Right ventricle myocardium inferior (tissue), 1 donor: ENCODE measurements at regions of chr22 and their contacts with region 1.

Region 1: DNA sequence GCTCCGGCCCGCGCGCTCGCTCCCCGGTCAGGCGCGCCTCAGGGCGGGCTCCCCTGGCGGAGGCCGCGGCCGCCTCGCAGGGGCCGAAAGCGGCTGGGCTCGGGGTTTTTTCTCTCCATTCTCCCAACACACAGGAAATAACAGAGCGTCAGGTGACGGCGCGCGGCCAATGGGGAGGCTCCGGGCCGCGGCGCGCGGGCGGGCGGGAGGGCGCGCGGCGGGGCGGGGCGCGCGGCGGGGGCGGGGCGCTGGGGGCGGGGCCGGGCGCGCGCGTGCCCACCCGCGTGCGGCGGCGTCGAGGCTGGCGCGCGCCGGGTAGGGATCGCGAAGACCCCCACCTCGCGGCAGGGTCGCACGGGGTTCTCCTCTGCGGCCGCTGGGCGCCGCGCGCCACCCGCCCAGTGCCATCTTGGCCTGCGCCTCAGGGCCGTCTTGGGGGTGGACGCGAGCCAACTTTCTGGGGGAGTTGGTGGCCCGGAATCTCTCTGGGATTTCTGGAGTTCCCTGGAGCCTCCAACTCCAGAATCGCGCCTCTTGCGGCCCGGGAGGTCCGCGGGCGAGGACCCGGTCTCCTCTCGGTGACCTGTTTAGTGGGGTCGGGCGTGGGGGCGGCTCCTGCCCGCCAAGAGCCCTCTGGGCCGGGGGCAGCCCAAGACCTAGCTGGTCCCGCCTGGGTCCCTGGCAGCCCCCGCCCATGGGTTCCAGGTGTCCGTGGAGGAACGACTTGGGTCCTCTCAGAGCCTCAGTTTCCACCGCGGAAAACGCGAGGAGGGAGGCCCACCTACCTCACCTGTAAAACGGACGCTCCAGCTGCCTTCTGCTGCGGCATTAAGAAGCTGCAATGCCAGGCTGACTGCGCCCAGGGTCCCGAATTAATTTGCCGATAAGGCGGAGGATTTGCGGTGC is at the start of gene TCF20:
- DNase-seq: peak; percentile 93
- ATAC-seq: peak; percentile 75
- total RNA-seq, gene TCF20: 16.7 TPM

Region 2: DNA sequence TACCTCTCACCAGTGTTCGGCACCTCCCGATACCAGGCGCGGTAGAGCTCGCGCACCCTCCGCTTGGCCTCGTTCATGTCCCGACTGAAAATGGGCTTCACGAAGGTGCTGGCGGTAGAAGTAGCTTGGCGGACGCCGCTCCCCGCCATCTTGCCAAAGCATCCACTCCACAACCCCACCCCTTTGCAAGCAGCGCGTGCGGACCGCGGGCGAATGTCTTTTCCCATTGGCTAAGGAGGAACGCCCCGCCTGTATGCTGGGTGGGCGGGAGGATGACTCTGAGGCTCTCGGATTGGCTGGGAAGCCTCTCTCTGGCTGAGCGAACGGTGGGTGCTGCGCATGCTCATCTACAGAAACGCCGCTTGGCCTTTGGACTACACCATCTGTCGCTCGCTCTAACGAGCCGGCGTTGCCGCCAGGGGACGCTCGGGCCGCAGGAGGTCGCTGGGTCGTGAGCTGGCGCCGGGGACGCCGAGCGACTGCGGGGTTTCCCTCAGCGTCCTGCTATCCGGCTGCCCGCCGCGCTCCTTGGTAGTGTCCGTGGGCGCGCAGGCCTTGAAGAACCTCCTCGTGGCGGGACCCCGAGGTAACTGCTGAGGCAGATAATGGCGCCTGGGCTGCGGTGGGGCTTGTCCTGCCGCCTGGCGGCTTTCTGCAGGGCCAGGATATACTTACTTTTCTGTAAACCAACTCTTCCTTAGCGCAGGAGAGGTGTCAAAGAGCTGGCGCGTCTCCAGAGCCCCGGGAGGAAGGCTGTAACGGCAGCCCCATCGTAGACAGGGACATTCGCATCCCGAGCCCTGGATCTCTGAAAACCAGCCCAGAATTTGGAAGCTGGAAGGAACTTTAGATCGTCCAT is 179.9 kb before region 1 on chr22 and contains the start of gene NDUFA6:
- intact Hi-C with region 1: loop called (anchors 5 kb)
- DNase-seq: peak; percentile 99
- ATAC-seq: peak; percentile 98
- total RNA-seq, gene NDUFA6: 296 TPM

Region 3: DNA sequence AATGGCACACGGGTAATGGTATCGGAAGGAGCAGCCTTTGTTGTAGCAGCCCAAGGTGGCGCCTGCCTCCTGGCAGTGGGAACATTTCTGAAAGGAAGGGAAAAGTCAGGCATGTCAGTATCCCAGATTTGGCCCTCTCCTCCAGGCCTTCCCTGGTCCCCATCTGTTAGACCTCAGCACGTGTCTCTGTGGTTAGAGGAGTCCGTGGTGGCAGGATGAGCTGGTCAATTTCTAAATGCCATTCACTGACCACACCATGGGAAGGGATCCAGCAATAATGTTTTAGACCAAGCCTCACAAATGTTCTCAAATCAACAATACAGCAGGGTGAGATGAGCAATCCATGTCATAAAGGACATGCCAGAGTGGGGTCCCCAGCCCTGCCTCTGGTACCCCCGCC is 91.1 kb before region 1 on chr22:
- intact Hi-C with region 1: loop called (anchors 10 kb)
- DNase-seq: no peak
- ATAC-seq: no peak

Region 4: DNA sequence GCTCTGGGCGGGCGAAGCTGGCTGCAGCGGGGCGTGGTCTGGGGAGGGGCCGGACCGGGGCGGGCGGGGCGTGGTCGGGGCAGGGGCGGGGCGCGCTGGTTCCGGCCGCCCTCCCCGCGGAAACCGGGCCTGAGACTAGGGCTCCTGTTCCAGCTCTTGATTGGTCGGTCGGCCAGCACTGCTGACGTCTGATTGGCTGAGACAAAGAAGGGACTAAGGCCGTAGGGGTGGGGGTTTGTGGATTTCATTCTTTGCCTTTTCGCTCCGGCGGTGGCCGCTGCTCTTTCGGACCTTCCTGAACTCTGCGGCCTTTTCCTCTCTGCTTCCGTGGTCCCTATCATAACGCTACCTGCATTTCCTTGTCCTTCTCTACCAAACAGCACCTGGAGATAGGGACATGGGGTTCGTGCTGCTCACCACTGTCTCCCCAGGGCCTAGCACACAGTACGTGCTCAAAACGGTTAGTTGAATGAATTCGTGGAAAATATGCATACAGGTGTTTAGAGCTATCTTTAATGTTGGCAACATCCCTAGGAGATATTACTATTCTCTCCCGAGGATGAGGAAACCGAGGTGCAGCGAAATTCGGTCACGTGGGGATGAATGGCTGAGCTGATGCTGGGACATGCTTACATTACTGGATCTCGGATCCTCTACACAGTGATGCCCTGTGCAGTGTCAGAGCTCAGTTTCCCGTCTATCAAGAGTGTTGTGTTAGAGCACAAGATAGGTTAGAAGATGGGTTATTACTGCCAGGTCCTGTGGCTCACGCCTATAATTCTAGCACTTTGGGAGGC is 98.7 kb after region 1 on chr22:
- intact Hi-C with region 1: loop called (anchors 10 kb)
- DNase-seq: peak; percentile 95
- ATAC-seq: peak; percentile 96

Region 5: DNA sequence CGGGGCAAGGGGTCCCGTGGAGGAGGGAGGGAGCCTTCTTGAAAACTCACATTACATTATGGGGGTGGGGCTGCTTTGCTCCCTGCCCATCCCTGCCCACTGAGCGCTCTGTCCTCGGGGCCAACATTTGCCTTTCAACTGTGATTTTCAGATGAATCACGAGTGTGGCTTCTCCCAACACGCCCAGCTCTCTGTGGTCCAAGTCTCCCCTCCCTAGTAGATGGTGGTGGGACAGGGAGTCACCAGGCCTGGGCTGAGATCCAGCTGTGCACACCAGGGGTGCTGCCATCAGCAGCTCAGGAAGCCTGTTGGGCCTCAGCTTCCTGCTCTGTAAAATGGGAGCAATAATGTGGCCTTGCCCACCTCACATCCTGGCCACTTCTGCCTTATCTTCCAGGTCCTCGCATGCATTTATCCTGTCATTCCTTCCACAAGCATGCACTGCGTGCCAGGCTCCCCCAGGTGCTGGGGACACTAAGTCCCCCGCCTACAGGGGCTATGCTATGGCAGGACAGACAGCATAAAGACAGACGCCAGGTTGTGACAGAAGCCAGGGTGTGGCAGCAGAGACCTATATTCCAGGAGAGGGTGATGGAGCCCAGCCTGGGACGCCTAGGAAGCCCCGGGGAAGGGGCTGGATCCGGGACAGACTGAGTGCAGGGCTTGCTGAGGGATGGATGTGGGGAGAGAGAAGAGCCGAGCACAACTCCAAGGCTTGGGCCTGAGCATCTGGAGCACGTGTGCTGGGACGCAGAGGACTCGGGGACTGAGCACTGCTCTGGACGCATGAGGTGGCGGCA is 131.0 kb after region 1 on chr22:
- intact Hi-C with region 1: no loop called
- DNase-seq: peak; percentile 11
- ATAC-seq: no peak

Region 6: GRCh38 chr22:42444077-42444904 is 173.5 kb after region 1 on chr22:
- intact Hi-C with region 1: loop called (anchors 5 kb)
- DNase-seq: peak; percentile 90
- ATAC-seq: peak; percentile 78